GM12878 (cell line): ENCODE measurements at regions of chr1 and their contacts with region 1.

Region 1: DNA sequence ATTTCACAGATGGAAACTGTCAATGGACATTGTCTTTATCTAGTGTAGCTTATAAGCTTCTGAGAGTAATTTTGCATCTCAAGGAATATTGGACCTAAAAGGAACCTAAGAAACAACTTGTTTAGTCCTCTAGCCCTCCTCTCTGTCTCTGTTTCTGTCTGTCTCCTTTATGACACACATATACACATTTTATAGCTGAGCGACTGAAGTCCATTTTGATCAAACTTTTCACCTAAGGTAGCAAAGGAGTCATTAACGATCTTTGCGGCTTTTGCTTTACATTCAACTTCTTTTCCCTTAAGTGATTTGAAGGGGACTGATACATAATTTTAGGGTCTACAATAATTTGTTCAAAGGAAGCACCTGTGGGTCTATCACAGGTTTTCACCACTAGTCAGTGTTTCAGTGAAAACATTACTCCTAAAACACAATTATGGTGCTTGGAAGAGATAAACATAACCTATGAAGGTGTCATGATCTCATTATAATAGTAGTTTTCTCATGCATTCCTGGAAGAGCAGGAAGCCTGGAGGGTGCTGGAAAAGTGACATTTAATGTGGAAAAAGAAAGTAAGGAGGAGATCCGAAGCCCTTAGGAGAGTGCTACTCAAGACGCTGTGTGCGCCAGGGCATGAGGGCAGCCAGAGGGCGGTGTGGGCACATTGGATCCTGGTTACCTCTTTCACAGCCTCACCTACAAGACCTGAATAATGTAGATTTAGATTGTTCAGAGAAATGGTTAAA is 248.6 kb downstream of the DNM3 start:
- DNase-seq: peak; percentile 50
- ATAC-seq: peak; percentile 100
- H3K4me3 ChIP-seq: no peak overlapping the region
- H3K27ac ChIP-seq: no peak overlapping the region
- H3K4me1 ChIP-seq: no peaks in the 10 kb centered on the region
- H3K27me3 ChIP-seq: no peaks in the 10 kb centered on the region
- CTCF ChIP-seq: peak; percentile 78 to 89 (median 79)
- EP300 ChIP-seq: no peak
- POLR2A ChIP-seq: no peak
- RAD21 ChIP-seq: peak; percentile 85

Region 2: DNA sequence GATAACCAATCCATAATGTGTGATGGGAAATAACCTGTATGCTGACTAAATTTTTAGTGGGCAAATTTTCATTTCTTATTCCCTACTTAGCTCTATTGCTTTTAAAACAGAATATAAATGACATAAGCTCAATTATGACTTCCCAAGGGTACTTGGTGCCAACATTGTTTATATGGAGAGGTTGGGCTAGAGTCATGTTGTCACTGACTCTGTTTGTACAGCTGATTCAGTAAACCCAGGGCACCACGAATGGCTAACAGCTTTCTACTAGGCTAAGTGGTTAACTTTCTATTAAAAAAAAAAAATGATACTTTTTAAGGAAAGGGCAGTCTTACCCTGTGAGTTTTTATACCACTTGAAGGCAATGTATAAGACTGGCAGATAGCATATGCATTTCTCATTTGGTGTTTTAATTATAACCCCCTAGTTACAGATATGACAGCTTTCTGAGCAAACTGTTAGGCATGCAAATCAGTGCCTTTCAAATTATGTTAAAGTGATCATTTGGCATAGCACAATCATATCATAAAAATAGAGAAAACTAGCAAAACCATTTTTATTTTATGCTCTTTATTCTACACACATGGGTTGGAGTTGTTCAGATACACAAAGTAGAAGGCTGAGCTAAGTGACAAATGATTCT is 101.6 kb before region 1 on chr1:
- CTCF ChIA-PET with region 1: no interaction called
- POLR2A ChIA-PET with region 1: no interaction called
- RAD21 ChIA-PET with region 1: no interaction called
- SMC1A ChIA-PET with region 1: no interaction called
- in situ Hi-C with region 1: no loop called
- intact Hi-C with region 1: no loop called
- DNase-seq: no peak
- ATAC-seq: no peak
- H3K4me3 ChIP-seq: no peak overlapping the region
- H3K27ac ChIP-seq: no peak overlapping the region
- H3K4me1 ChIP-seq: no peaks in the 10 kb centered on the region
- H3K27me3 ChIP-seq: no peaks in the 10 kb centered on the region; a peak in 2 of 4 replicates
- CTCF ChIP-seq: no peak
- EP300 ChIP-seq: no peak
- POLR2A ChIP-seq: no peak
- RAD21 ChIP-seq: no peak

Region 3: DNA sequence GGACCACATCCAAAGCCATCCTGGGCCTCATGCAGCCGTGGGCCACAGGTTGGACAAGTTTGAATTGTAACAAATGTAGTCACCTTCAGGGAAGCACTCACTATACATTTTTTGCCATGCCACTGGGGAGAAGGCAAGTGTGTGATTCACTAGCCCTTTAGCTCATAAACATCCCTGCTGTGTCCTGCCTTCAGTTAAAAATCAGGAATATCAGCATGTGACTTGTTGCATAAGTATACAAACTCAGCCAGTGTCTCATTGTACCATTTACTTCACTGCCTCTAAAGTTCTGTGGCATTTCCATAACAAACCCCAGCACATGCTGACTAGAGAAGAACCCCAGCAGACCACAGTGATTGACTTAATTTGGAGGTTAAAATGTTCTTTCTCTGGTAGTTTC is 188.5 kb after region 1 on chr1:
- CTCF ChIA-PET with region 1: interaction called, 3 read pairs
- POLR2A ChIA-PET with region 1: no interaction called
- RAD21 ChIA-PET with region 1: interaction called, 3 read pairs
- SMC1A ChIA-PET with region 1: interaction called, 3 read pairs
- in situ Hi-C with region 1: no loop called
- intact Hi-C with region 1: loop called (anchors 10 kb)
- DNase-seq: no peak
- ATAC-seq: no peak
- H3K4me3 ChIP-seq: no peak overlapping the region
- H3K27ac ChIP-seq: no peak overlapping the region
- H3K4me1 ChIP-seq: peaks cover 11% of the 10 kb centered on the region
- H3K27me3 ChIP-seq: no peaks in the 10 kb centered on the region
- CTCF ChIP-seq: no peak
- EP300 ChIP-seq: no peak
- POLR2A ChIP-seq: no peak
- RAD21 ChIP-seq: no peak

Region 4: GRCh38 chr1:172338295-172338735 is 248.4 kb after region 1 on chr1:
- CTCF ChIA-PET with region 1: interaction called, 3 read pairs
- POLR2A ChIA-PET with region 1: no interaction called
- RAD21 ChIA-PET with region 1: interaction called, 3 read pairs
- SMC1A ChIA-PET with region 1: interaction called, 9 read pairs
- in situ Hi-C with region 1: no loop called
- intact Hi-C with region 1: loop called (anchors 1 kb)
- DNase-seq: peak; percentile 74
- ATAC-seq: peak; percentile 74
- H3K4me3 ChIP-seq: peak overlapping the region; percentile 28; the same call in 1 of the 2 replicates
- H3K27ac ChIP-seq: peak overlapping the region; percentile 98
- H3K4me1 ChIP-seq: peaks cover 44% of the 10 kb centered on the region
- H3K27me3 ChIP-seq: no peaks in the 10 kb centered on the region
- CTCF ChIP-seq: no peak
- EP300 ChIP-seq: peak in 1 of 2 experiments; percentile 34; a peak in 1 of 4 replicates
- POLR2A ChIP-seq: no peak
- RAD21 ChIP-seq: no peak

Region 5: GRCh38 chr1:172351761-172352161 is 261.8 kb after region 1 on chr1:
- CTCF ChIA-PET with region 1: no interaction called
- POLR2A ChIA-PET with region 1: no interaction called
- RAD21 ChIA-PET with region 1: no interaction called
- SMC1A ChIA-PET with region 1: interaction called, 17 read pairs
- in situ Hi-C with region 1: no loop called
- intact Hi-C with region 1: loop called (anchors 1 kb)
- DNase-seq: no peak
- ATAC-seq: no peak
- H3K4me3 ChIP-seq: no peak overlapping the region
- H3K27ac ChIP-seq: no peak overlapping the region
- H3K4me1 ChIP-seq: peaks cover 4% of the 10 kb centered on the region
- H3K27me3 ChIP-seq: no peaks in the 10 kb centered on the region
- CTCF ChIP-seq: no peak
- EP300 ChIP-seq: no peak
- POLR2A ChIP-seq: no peak
- RAD21 ChIP-seq: no peak

Region 6: DNA sequence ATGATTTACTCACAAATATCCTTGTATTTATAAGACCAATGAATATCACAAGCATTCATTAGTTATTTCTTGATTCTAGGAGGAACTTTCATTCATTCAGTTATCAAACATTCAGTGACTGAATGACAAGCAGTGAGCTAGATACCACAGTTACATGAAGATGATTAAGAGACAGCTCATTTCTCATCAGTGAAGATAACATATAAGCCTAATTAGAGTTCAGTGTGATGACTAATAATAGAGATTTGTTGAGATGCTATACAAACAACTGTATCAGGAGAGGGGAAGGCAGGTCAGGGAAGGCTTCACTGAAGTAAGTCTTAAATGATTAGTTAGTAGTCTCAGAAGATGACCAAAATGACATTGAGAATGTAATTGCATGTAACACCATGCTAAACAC is 316.0 kb after region 1 on chr1:
- CTCF ChIA-PET with region 1: interaction called, 71 read pairs
- POLR2A ChIA-PET with region 1: no interaction called
- RAD21 ChIA-PET with region 1: interaction called, 60 read pairs
- SMC1A ChIA-PET with region 1: interaction called, 113 read pairs
- in situ Hi-C with region 1: no loop called
- intact Hi-C with region 1: no loop called
- DNase-seq: no peak
- ATAC-seq: peak; percentile 59
- H3K4me3 ChIP-seq: no peak overlapping the region
- H3K27ac ChIP-seq: no peak overlapping the region
- H3K4me1 ChIP-seq: no peaks in the 10 kb centered on the region
- H3K27me3 ChIP-seq: no peaks in the 10 kb centered on the region
- CTCF ChIP-seq: no peak
- EP300 ChIP-seq: no peak
- POLR2A ChIP-seq: no peak
- RAD21 ChIP-seq: no peak

Region 7: GRCh38 chr1:172429331-172430127 is 339.6 kb after region 1 on chr1:
- CTCF ChIA-PET with region 1: interaction called, 19 read pairs
- POLR2A ChIA-PET with region 1: no interaction called
- RAD21 ChIA-PET with region 1: interaction called, 5 read pairs
- SMC1A ChIA-PET with region 1: interaction called, 10 read pairs
- in situ Hi-C with region 1: no loop called
- intact Hi-C with region 1: loop called (anchors 1 kb)
- DNase-seq: peak; percentile 34
- ATAC-seq: peak; percentile 85
- H3K4me3 ChIP-seq: no peak overlapping the region
- H3K27ac ChIP-seq: no peak overlapping the region
- H3K4me1 ChIP-seq: peaks cover 8% of the 10 kb centered on the region
- H3K27me3 ChIP-seq: no peaks in the 10 kb centered on the region
- CTCF ChIP-seq: peak; percentile 56 to 75 (median 65)
- EP300 ChIP-seq: no peak
- POLR2A ChIP-seq: no peak
- RAD21 ChIP-seq: peak; percentile 67

Region 8: DNA sequence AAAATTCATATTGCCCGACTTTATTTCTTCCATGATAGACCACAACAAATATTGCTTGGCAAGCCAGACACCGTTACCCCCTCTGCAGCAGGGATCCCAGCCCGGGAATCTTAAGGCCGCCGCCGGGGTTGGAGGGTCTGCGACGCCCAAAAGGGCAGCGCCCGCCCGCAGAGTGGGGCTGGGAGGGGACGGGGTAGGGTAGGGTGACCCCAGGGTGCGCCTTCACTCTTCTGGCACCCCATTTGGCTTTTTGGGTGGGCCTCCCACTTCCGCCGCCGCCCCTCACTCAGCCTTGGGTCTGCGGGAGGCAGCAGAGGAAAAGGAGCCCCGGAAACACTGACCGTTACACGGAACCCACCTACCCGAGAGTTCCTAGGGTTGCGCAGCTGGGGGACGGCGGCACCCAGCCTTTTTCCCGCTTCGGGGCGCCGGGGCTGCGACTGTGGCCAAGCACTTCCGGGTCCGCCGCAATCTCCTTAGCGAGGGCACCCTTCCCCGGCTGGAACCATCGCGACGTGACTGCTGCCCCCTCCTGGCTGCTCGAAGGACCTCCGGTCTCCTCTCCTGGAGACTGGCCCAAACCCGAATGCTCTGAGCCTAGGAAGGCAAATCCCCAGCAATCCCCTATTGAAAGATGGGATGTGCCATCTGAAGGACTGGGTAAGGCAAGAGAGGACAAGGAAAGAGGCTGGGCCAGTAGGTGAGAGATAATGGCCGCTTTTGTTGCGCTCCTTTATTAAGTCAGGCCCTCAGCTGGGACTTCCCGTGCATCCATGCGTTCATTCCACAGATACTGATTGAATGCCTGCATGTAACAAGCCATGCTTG is 353.9 kb after region 1 on chr1 and contains the start of gene PIGC:
- CTCF ChIA-PET with region 1: interaction called, 18 read pairs
- POLR2A ChIA-PET with region 1: interaction called, 3 read pairs
- RAD21 ChIA-PET with region 1: interaction called, 16 read pairs
- SMC1A ChIA-PET with region 1: interaction called, 11 read pairs
- in situ Hi-C with region 1: no loop called
- intact Hi-C with region 1: loop called (anchors 1 kb)
- DNase-seq: peak; percentile 59
- ATAC-seq: peak; percentile 99
- H3K4me3 ChIP-seq: peak within 1 kb of the TSS; percentile 94
- H3K27ac ChIP-seq: peak within 1 kb of the TSS; percentile 82
- H3K4me1 ChIP-seq: no peaks in the 10 kb centered on the region
- H3K27me3 ChIP-seq: no peaks in the 10 kb centered on the region
- CTCF ChIP-seq: peak; percentile 89 to 93 (median 91)
- EP300 ChIP-seq: no peak
- POLR2A ChIP-seq: peak; percentile 91
- RAD21 ChIP-seq: peak; percentile 73
- polyA plus RNA-seq, gene PIGC: 23.3 to 29.7 TPM